Mammary epithelial cell (primary cell): ENCODE measurements at regions of chr5 and their contacts with region 1.

Region 1: GRCh38 chr5:67010684-67011409 is 185.8 kb downstream of the CD180 start:
- DNase-seq: peak; percentile 99
- H3K4me3 ChIP-seq: peak overlapping the region; percentile 0 to 34 (median 31)
- H3K27ac ChIP-seq: peak overlapping the region; percentile 98
- H3K4me1 ChIP-seq: peaks cover 71% of the 10 kb centered on the region
- H3K27me3 ChIP-seq: no peaks in the 10 kb centered on the region
- CTCF ChIP-seq: no peak

Region 2: DNA sequence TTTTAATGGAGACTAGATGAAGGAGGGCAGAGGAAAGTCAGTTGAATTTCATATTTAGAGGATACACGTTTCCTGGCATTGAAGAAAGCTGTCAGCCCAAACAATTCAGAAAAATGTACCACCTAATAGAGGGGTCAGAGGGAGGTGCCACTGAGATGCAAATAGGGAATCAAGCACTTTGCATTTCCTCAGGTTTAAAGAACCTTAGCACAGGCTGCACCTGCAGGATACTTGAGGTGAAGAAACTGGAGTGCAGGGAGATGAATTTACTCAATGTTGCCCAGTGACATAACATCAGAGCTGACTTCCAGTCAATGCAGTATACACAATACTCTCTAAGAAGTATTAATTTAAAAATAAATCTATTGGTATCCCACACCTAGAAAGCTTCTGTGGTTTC is 481.7 kb before region 1 on chr5:
- CTCF ChIA-PET with region 1: no interaction called
- dilution Hi-C with region 1: no loop called
- in situ Hi-C with region 1: no loop called
- intact Hi-C with region 1: no loop called
- DNase-seq: no peak
- H3K4me3 ChIP-seq: no peak overlapping the region
- H3K27ac ChIP-seq: no peak overlapping the region
- H3K4me1 ChIP-seq: no peaks in the 10 kb centered on the region
- H3K27me3 ChIP-seq: peaks cover 8% of the 10 kb centered on the region
- CTCF ChIP-seq: peak in 1 of 2 donors; percentile 5

Region 3: DNA sequence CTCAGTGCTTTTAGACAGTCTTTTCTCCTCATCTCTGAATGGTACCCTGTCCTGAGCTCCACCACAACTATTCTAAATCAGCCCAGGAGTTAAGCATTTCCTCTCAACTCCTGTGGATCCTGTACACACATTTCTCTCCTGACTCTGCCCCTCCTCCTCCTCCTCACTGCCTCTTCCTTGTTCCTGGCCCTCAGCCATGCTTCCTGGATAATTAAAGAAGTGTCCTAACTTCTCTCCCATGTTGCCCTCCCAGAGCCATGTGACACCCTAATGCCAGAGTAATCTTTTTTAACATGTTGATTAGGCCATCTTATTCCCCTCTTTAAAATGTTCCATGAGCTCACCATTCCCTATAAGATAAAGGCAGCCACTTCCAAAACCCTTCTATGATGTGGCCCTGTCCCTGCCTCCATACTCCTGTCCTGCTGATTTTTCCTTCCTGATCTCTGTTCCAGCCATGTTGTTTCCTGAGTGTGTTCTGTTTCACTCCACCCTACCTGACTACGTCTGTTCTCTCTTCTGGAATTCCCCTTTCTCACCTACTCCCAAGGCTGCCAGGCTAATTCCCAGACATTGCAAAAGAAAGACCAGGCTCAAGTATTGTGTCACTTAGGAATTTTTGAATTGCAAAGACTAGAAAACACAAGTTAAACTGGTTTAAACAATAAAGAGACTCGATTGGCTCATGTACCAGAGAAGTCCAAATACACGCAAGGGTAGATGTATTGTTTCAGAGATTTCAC is 119.5 kb before region 1 on chr5:
- CTCF ChIA-PET with region 1: no interaction called
- dilution Hi-C with region 1: loop called (anchors 5 kb)
- in situ Hi-C with region 1: loop called in 1 of 2 experiments (anchors 5 kb)
- intact Hi-C with region 1: loop called (anchors 5 kb)
- DNase-seq: peak; percentile 99
- H3K4me3 ChIP-seq: no peak overlapping the region
- H3K27ac ChIP-seq: peak overlapping the region; percentile 100
- H3K4me1 ChIP-seq: peaks cover 56% of the 10 kb centered on the region
- H3K27me3 ChIP-seq: no peaks in the 10 kb centered on the region
- CTCF ChIP-seq: no peak

Region 4: GRCh38 chr5:67021521-67021920 is 10.7 kb after region 1 on chr5:
- CTCF ChIA-PET with region 1: no interaction called
- dilution Hi-C with region 1: no loop called
- in situ Hi-C with region 1: no loop called
- intact Hi-C with region 1: loop called (anchors 1 kb)
- DNase-seq: peak; percentile 58
- H3K4me3 ChIP-seq: peak overlapping the region in 1 of 3 experiments; percentile 33
- H3K27ac ChIP-seq: peak overlapping the region; percentile 95
- H3K4me1 ChIP-seq: peaks cover 35% of the 10 kb centered on the region
- H3K27me3 ChIP-seq: no peaks in the 10 kb centered on the region
- CTCF ChIP-seq: no peak

Region 5: DNA sequence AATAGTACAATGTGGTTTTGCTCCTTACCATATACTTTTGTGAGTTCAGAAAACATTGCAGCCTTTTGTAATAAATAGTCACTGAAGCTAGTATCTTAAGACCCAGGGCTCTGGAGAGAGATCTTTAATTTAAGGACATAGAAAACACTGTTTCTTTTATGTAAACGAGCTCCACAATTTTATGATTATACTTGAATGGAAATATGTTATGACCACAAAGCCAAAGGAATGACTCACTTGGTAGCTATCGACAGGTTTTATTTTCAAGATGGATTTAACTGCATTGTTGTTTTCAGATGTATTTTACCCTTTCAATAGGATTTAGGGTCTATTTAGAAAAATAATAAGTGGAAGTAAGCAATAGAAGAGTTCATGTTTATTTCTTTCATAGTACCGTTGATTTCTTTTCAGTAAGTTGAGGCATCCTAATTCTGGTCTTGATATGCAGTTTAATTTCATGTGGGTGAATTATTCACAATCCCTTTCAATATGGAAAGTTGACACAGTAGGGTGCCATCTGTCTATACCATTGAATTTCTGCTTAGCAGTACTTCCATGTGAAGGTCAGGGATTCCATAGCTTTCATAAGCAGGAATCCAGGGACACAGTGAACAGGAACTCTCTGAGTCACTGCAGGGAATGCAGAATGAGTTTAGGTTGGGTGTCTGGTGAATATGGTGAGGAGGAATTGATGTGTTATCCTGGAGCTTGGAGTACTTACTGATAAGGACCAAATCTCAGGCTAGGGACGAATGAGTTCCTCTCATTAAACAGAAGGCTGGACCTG is 28.2 kb after region 1 on chr5:
- CTCF ChIA-PET with region 1: interaction called, 3 read pairs
- dilution Hi-C with region 1: no loop called
- in situ Hi-C with region 1: no loop called
- intact Hi-C with region 1: loop called (anchors 2 kb)
- DNase-seq: peak; percentile 55
- H3K4me3 ChIP-seq: no peak overlapping the region
- H3K27ac ChIP-seq: peak overlapping the region; percentile 63
- H3K4me1 ChIP-seq: peaks cover 31% of the 10 kb centered on the region
- H3K27me3 ChIP-seq: no peaks in the 10 kb centered on the region
- CTCF ChIP-seq: no peak

Region 6: DNA sequence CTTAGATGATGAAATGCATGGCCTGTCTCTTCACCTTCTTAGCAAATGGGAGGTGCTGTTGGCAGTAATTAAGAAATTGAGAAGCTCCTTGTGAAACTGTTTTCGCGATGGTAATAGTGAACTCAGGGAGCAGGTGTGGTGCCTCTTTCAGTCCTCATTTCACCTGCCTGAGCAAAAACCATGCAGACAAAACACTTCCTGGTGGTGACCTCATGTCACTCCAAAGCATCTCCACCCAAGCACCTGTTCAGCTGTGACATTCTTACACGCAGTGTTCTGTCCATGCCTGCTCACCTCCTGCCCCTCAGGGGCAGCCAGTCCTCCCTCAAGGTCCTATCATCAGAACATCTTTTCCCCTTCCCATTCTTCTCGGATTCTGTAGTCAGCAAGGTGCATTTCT is 39.3 kb after region 1 on chr5:
- CTCF ChIA-PET with region 1: no interaction called
- dilution Hi-C with region 1: no loop called
- in situ Hi-C with region 1: no loop called
- intact Hi-C with region 1: loop called (anchors 5 kb)
- DNase-seq: no peak
- H3K4me3 ChIP-seq: no peak overlapping the region
- H3K27ac ChIP-seq: no peak overlapping the region
- H3K4me1 ChIP-seq: peaks cover 13% of the 10 kb centered on the region
- H3K27me3 ChIP-seq: no peaks in the 10 kb centered on the region
- CTCF ChIP-seq: no peak

Region 7: DNA sequence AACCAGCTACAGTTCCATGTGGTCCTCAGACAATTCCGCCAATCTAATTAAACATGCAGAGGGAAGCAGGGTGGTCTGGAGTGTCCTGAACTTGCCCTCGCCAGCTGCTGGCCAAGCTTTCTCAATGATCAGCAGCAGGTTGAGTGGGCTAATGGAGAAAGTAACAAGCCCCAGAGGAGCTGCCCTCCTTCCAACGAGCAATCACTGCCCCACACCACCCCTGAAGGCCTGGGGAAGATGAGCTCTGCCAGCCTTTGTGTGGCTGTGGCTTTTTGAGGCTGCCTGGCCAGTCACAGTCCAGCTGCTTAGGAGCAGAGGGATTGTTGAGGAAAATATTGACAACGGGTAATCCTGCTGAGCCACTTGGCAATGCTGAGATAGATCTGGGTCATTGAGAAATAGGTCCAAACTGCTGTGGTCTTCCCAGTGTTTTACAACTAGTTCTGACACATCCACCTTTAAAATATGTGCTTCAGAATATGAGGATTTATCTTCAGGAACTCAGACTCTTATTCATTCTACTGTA is 78.4 kb after region 1 on chr5:
- CTCF ChIA-PET with region 1: no interaction called
- dilution Hi-C with region 1: loop called (anchors 5 kb)
- in situ Hi-C with region 1: no loop called
- intact Hi-C with region 1: no loop called
- DNase-seq: peak; percentile 69
- H3K4me3 ChIP-seq: no peak overlapping the region
- H3K27ac ChIP-seq: peak overlapping the region; percentile 46
- H3K4me1 ChIP-seq: peaks cover 29% of the 10 kb centered on the region
- H3K27me3 ChIP-seq: no peaks in the 10 kb centered on the region
- CTCF ChIP-seq: no peak